CD8-positive, alpha-beta T cell (primary cell): ENCODE measurements at regions of chr3 and their contacts with region 1.

Region 1: DNA sequence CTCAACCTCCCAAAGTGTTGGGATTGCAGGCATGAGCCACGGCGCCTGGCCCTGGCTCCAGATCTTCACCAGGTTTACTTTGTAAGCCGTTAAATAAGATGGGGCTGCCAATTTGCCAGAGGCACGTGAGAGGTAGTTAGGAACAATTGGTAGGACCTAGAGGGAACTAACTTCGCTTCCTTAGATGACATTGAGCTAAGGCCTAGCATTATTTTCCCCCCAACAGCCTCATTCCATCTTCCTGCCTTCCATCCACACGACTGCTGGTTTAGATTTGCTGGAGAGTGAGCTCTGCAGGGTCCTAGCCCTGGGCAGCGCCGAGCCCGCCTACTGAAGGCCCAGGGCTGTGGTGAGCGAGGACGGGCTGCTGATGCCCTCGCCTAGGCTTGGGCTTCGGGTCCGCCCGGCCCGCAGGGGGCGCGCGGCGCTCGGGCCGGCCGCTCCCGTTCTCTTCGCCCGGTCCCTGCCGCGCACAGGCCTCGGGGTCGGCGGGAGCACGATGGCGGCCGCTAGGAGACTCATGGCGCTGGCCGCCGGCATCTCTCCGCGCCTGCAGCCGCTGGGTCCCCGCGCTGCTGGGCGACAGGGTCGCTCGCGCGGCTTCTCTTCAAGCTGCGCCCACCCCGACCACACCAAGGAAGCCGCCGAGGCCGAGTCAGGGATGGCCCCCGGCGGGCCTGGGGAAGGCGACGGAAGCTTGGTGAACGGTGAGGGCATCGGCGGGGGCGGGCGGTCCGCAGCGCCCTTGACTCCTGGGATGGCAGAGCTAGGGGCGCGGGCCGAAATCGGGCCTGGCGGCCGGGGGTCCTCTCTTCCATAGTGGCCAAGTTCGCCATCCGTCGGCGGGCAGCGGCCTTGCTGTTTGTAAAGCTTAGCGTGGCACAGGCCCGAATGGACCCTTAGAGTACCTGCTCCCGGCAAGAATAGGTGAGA is 21.9 kb downstream of the DHX30 start:
- DNase-seq: peak; percentile 59 to 91 (median 75)
- ATAC-seq: peak; percentile 98
- H3K4me3 ChIP-seq: peak overlapping the region; percentile 67 to 95
- H3K4me3 Mint-ChIP-seq: peak overlapping the region; percentile 88
- H3K27ac ChIP-seq: peak overlapping the region; percentile 67 to 72
- H3K27ac Mint-ChIP-seq: peak overlapping the region; percentile 93
- H3K4me1 ChIP-seq: peaks cover 17% of the 10 kb centered on the region
- H3K4me1 Mint-ChIP-seq: peaks cover 32% of the 10 kb centered on the region
- H3K27me3 ChIP-seq: no peaks in the 10 kb centered on the region
- H3K27me3 Mint-ChIP-seq: no peaks in the 10 kb centered on the region
- CTCF ChIP-seq: peak; percentile 74

Region 2: GRCh38 chr3:47513125-47513929 is 311.5 kb before region 1 on chr3 and contains the start of gene ELP6:
- CTCF ChIA-PET with region 1: no interaction called
- POLR2A ChIA-PET with region 1: no interaction called
- intact Hi-C with region 1: loop called in 1 of 2 experiments (anchors 1 kb)
- DNase-seq: peak; percentile 92 to 99 (median 96)
- ATAC-seq: peak; percentile 91
- H3K4me3 ChIP-seq: peak within 1 kb of the TSS; percentile 85 to 99
- H3K4me3 Mint-ChIP-seq: peak within 1 kb of the TSS; percentile 98
- H3K27ac ChIP-seq: peak within 1 kb of the TSS; percentile 88 to 95
- H3K27ac Mint-ChIP-seq: peak within 1 kb of the TSS; percentile 97
- H3K4me1 ChIP-seq: peaks cover 11% of the 10 kb centered on the region
- H3K4me1 Mint-ChIP-seq: peaks cover 22% of the 10 kb centered on the region
- H3K27me3 ChIP-seq: no peaks in the 10 kb centered on the region
- H3K27me3 Mint-ChIP-seq: no peaks in the 10 kb centered on the region
- CTCF ChIP-seq: peak; percentile 66
- total RNA-seq, gene ELP6: 13.0 to 13.7 TPM

Region 3: DNA sequence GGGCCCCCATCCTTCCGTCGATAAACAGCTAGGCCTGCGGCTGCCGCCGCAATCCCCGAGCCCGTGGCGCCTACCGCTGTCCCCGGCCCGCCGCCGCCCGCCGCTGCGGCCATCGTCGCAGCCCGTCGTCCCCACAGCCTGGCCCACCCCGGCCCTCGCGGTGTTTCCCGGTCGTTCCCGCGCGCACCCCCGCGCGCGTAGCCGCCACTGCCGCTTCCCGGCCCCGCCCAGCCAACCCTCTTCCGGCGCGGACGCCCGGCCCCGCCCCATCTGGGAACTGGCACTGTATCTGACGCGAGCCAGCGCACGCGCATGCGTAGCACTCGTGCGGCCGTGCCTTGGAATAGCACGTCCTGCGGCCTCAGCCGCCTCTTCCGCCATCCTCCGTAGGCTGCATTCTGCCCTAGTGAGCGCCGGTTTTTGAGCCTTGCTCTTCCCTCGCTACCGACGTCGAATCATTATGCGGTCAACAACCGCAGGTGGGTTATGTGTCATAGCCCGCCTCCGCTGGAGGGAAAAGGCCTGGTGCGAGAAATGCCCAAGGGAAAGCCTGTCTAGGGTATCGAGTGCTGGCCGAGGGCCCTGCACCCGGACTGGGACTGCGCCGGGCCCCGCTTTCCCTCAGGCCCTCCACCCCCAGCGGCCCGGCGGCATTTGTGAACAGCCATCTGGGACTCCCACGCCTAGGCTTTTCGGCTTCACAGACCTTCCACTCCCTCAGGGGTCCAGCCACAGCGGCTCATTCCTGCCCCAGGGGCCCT is 42.9 kb before region 1 on chr3 and contains the start of gene SMARCC1:
- CTCF ChIA-PET with region 1: interaction called, 3 read pairs
- POLR2A ChIA-PET with region 1: no interaction called
- intact Hi-C with region 1: loop called in 1 of 2 experiments (anchors 2 kb)
- DNase-seq: peak; percentile 91 to 99 (median 97)
- ATAC-seq: peak; percentile 87
- H3K4me3 ChIP-seq: peak within 1 kb of the TSS; percentile 54 to 91
- H3K4me3 Mint-ChIP-seq: peak within 1 kb of the TSS; percentile 89
- H3K27ac ChIP-seq: peak within 1 kb of the TSS; percentile 87 to 98
- H3K27ac Mint-ChIP-seq: peak within 1 kb of the TSS; percentile 97
- H3K4me1 ChIP-seq: peaks cover 23% of the 10 kb centered on the region
- H3K4me1 Mint-ChIP-seq: peaks cover 31% of the 10 kb centered on the region
- H3K27me3 ChIP-seq: no peaks in the 10 kb centered on the region
- H3K27me3 Mint-ChIP-seq: no peaks in the 10 kb centered on the region
- CTCF ChIP-seq: no peak
- total RNA-seq, gene SMARCC1: 65.4 to 68.2 TPM

Region 4: GRCh38 chr3:47836986-47837385 is 12.2 kb after region 1 on chr3:
- CTCF ChIA-PET with region 1: interaction called, 15 read pairs
- POLR2A ChIA-PET with region 1: interaction called, 4 read pairs
- intact Hi-C with region 1: no loop called
- DNase-seq: no peak
- ATAC-seq: no peak
- H3K4me3 ChIP-seq: no peak overlapping the region
- H3K4me3 Mint-ChIP-seq: no peak overlapping the region
- H3K27ac ChIP-seq: no peak overlapping the region
- H3K27ac Mint-ChIP-seq: no peak overlapping the region
- H3K4me1 ChIP-seq: no peaks in the 10 kb centered on the region
- H3K4me1 Mint-ChIP-seq: peaks cover 2% of the 10 kb centered on the region
- H3K27me3 ChIP-seq: no peaks in the 10 kb centered on the region
- H3K27me3 Mint-ChIP-seq: no peaks in the 10 kb centered on the region
- CTCF ChIP-seq: no peak

Region 5: DNA sequence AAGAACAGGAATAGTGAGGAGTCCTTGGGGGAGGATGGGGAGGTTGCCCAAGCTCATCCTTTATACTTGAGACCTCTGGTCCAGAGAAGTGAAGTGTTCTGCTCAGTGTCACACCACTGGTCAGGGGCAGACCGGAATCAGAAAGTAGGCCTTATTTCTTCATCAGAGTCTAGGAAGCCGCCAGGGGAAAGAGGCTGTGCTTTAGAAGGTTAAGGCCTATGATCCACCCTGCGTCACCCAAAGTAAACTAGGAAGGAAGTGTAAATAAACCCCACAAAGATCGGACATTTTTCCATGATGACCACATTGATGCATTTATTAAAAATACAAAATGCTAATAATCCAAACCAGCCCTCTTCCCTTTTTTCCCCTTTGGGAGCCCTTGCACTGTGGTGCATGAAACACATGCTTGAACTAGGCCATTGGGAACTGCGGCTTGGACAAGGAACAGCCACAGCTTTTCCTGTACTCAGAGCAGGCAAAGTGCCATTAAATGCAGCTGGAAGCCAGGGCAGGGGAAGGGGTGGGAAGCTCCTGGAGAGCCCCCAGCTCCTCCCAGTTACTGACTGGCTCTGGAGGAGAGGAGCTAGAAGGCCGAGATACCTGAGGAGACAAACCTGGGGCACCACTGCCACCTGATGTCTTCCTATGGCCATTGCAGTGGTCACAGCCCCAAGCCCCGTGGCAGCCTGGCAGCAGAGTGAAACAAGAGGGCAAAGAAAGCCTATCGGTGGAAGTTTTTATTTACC is 326.4 kb after region 1 on chr3:
- CTCF ChIA-PET with region 1: interaction called, 9 read pairs
- POLR2A ChIA-PET with region 1: no interaction called
- intact Hi-C with region 1: loop called in 1 of 2 experiments (anchors 2 kb)
- DNase-seq: peak; percentile 13 to 69 (median 52)
- ATAC-seq: peak; percentile 85
- H3K4me3 ChIP-seq: no peak overlapping the region
- H3K4me3 Mint-ChIP-seq: no peak overlapping the region
- H3K27ac ChIP-seq: no peak overlapping the region
- H3K27ac Mint-ChIP-seq: no peak overlapping the region
- H3K4me1 ChIP-seq: no peaks in the 10 kb centered on the region
- H3K4me1 Mint-ChIP-seq: no peaks in the 10 kb centered on the region
- H3K27me3 ChIP-seq: no peaks in the 10 kb centered on the region
- H3K27me3 Mint-ChIP-seq: peaks cover 3% of the 10 kb centered on the region
- CTCF ChIP-seq: peak; percentile 45